ENCODE measurements at regions of chr19 and their contacts with region 1.

Region 1: GRCh38 chr19:5805465-5806132 is 732 bp downstream of the NRTN start:
- DNase-seq: peak; percentile 77 to 85
- ATAC-seq: peak; percentile 54

Region 2: GRCh38 chr19:5891938-5892771 is 86.6 kb after region 1 on chr19:
- intact Hi-C with region 1: loop called (anchors 5 kb)
- DNase-seq: peak in 1 of 2 donors; percentile 63
- ATAC-seq: peak; percentile 79

Region 3: GRCh38 chr19:5897189-5897969 is 91.8 kb after region 1 on chr19:
- intact Hi-C with region 1: loop called (anchors 5 kb)
- DNase-seq: no peak
- ATAC-seq: no peak

Measured in left colon (tissue), 2 donors.